Right lobe of liver (tissue), 6 donors: ENCODE measurements at regions of chr14 and their contacts with region 1.

Region 1: DNA sequence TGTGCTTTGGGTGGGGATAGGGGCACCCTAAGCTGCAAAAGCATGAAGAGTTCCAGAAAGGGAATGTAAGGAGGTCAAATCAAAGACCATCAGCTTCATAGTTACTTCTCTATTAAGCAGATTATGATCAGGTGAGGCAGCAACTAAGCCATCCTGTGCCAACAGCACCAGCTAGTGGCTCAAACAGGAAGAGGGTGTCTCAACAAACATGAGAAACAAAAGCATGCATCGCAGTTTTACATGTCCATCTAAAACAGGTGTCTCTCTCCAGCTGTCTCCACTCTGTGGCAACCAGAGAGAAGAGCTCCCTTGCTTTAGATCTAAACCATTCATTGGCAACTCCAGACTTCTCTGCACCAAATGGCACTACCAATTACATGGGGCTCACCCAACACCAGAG is 52.9 kb downstream of the ACTN1 start:
- DNase-seq: no peak
- ATAC-seq: no peak
- H3K4me3 ChIP-seq: no peak overlapping the region
- H3K27ac ChIP-seq: peak overlapping the region in 1 of 3 donors; percentile 80
- H3K4me1 ChIP-seq: peaks cover 0 to 28% (median 0%) of the 10 kb centered on the region in 4 donors
- H3K27me3 ChIP-seq: no peaks in the 10 kb centered on the region
- CTCF ChIP-seq: peak; percentile 15 to 30 (median 26)
- POLR2A ChIP-seq: no peak

Region 2: GRCh38 chr14:68995731-68996130 is 69.5 kb after region 1 on chr14:
- intact Hi-C with region 1: loop called in 1 of 2 experiments (anchors 10 kb)
- DNase-seq: no peak
- ATAC-seq: no peak
- H3K4me3 ChIP-seq: no peak overlapping the region
- H3K27ac ChIP-seq: no peak overlapping the region
- H3K4me1 ChIP-seq: no peaks in the 10 kb centered on the region
- H3K27me3 ChIP-seq: no peaks in the 10 kb centered on the region
- CTCF ChIP-seq: no peak
- POLR2A ChIP-seq: no peak